Activated naive CD4-positive, alpha-beta T cell treated with anti-CD3 and anti-CD28 coated beads for 36 hours (primary cell): ENCODE measurements at regions of chr12 and their contacts with region 1.

Region 1: DNA sequence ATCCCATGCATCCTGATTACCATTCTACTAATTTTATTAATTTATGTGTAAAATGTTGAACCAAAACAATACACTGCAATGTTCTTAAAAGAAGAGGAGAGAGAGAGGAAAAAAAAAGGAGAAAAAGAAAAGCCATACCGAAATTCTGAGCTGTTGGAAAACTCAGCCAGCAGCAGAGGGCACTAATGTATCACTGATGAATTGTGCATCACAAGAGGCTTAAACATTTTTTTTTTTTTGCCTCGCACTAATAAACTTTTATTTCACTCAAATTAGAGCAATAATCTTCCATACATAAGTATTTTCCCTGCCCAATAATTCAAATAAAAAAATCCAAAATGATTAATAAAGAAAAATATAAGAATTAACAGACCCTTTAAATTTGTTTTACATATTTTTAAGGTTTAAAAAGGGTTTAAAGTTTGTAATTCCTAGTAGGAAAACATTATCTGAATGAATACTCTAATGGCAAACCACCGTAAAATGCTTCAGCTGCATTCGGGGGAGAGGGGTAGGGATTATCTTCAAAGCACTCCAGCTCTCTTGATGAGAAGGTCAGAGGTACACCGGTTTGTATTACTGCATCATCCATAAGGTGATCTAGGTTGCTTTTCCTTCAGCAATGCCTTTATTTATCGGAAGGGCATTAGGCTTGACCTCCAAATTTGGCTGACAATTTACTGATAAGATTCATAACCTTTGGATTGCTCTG is 41.9 kb downstream of the ATP23 start:
- DNase-seq: peak; percentile 63
- H3K4me3 Mint-ChIP-seq: no peak overlapping the region
- H3K27ac Mint-ChIP-seq: no peak overlapping the region
- H3K4me1 Mint-ChIP-seq: no peaks in the 10 kb centered on the region
- H3K27me3 Mint-ChIP-seq: peaks cover 7% of the 10 kb centered on the region

Region 2: DNA sequence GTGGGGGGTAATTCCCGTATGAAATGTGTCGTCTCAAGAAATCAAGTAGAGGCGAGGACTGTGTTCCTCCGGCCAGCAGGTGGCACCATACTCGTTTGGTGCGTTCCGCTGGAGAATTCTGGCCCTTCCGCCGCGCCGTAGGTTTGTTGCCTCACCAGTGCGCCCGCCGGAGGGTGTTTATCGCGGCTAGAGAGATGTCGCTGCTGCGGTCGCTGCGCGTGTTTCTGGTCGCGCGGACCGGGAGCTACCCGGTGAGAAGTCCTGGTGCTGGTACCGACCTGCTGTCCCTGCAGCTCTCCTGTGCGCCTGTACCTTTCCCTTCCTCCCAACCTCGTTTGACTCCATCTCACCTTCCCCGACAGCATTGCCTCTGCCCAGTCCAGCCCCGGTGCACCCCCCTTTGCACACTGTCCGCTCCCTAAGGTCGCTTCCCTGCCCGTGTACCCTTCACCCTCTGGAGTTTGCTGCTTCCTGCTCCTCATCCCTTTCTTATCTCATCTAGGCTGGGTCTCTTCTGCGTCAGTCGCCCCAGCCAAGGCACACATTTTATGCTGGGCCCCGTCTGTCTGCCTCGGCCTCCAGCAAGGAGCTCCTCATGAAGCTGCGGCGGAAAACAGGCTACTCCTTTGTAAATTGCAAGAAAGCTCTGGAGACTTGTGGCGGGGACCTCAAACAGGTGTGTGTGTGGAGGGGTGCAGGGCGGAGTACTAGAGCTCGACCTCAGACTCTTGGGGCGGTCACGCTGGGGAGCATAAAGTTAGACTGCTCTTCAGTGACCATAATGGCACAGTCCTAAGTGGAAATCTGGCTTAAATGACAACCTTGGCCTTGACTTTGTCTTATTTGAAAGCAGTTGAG is 200.5 kb before region 1 on chr12 and contains the start of gene TSFM:
- CTCF ChIA-PET with region 1: no interaction called
- intact Hi-C with region 1: no loop called
- DNase-seq: peak; percentile 99
- H3K4me3 Mint-ChIP-seq: peak within 1 kb of the TSS; percentile 100
- H3K27ac Mint-ChIP-seq: peak within 1 kb of the TSS; percentile 86
- H3K4me1 Mint-ChIP-seq: peaks cover 29% of the 10 kb centered on the region
- H3K27me3 Mint-ChIP-seq: no peaks in the 10 kb centered on the region
- total RNA-seq, gene TSFM: 32.8 to 34.3 TPM

Region 3: GRCh38 chr12:57836442-57837375 is 146.6 kb before region 1 on chr12:
- CTCF ChIA-PET with region 1: no interaction called
- intact Hi-C with region 1: no loop called
- DNase-seq: peak; percentile 81
- H3K4me3 Mint-ChIP-seq: peak overlapping the region; percentile 40
- H3K27ac Mint-ChIP-seq: peak overlapping the region; percentile 89
- H3K4me1 Mint-ChIP-seq: peaks cover 97% of the 10 kb centered on the region
- H3K27me3 Mint-ChIP-seq: no peaks in the 10 kb centered on the region

Region 4: GRCh38 chr12:57935839-57936512 is 47.3 kb before region 1 on chr12:
- CTCF ChIA-PET with region 1: no interaction called
- intact Hi-C with region 1: loop called (anchors 1 kb)
- DNase-seq: peak; percentile 96
- H3K4me3 Mint-ChIP-seq: peak overlapping the region; percentile 96
- H3K27ac Mint-ChIP-seq: peak overlapping the region; percentile 96
- H3K4me1 Mint-ChIP-seq: peaks cover 23% of the 10 kb centered on the region
- H3K27me3 Mint-ChIP-seq: no peaks in the 10 kb centered on the region

Region 5: DNA sequence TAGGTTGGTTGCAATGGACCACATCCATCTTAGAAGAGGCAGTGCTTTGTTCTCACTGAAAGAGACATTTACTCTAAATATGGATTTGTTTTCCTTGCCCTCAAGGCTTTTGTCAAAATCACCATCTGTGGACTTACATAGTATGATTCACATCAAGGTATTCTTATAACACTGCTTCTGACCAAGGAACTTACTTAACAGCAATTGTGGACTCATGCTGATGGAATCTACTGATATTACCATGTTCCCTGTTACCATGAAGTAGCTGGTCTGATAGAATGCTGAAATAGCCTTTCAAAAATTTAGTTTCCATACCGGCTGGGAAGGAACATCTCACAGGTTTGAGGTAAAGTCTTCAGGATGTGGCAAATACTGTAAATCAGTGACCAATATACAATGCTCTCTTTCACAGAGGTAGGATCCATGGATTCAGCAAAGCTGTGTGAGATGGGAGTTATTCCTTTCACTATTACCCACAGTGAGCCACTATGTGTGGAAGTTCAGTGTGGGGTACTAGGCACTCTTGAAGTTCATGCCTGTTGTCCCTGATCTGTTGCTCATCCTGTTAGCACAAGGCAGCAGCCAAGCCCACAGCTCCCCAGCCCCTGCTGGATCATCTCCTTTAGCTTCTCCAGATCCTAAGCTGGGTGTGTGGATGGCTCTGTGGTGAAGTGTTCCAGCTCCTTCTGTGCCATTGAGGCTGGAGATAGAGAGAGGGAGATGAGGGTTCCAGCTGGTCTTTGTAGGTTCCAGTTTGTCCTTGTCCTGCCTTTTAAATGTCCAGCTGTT is 84.5 kb after region 1 on chr12:
- CTCF ChIA-PET with region 1: no interaction called
- intact Hi-C with region 1: no loop called
- DNase-seq: no peak
- H3K4me3 Mint-ChIP-seq: no peak overlapping the region
- H3K27ac Mint-ChIP-seq: no peak overlapping the region
- H3K4me1 Mint-ChIP-seq: no peaks in the 10 kb centered on the region
- H3K27me3 Mint-ChIP-seq: no peaks in the 10 kb centered on the region